Transverse colon (tissue), 4 donors: ENCODE measurements at regions of chr10 and their contacts with region 1.

Region 1: DNA sequence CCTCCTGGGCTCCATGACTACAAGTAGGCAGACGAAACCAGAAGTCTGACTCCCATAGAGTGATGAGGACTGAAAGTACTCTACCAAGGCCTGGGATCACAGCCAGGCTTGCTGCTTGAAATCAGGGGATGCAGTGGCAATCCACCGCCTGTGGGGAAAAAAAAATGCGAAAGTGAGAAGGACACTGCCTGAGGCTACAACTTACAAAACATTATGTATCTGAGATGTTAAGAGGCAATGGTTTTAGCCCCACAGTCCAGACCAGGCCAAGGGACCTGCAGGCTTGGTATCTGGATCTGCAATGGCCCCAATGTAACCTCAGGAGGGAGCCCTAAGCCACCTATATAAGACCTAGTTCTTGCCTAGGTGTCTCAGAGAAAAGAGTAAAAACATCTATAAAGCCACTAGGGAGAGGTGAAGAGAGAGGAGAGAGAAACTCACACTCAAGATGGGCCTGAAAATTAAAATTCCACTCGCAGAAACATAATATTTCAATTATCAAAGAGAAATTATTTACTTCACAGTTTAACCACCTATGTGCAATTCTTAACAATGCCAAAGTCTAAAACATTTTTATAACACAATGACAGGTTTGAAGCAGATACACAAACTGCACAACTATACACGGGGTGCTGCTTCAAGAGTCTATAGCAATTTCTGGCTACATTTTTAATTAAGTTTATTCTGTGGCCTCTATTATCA is 13.9 kb downstream of the DNAJC1 start:
- DNase-seq: peak; percentile 39
- H3K4me3 ChIP-seq: no peak overlapping the region
- H3K27ac ChIP-seq: peak overlapping the region in 1 of 4 donors; percentile 25
- H3K4me1 ChIP-seq: peaks cover 0 to 10% (median 3%) of the 10 kb centered on the region in 4 donors
- H3K27me3 ChIP-seq: no peaks in the 10 kb centered on the region
- CTCF ChIP-seq: peak in 4 of 5 experiments; percentile 36 to 52 (median 42)
- EP300 ChIP-seq: no peak
- POLR2A ChIP-seq: no peak

Region 2: DNA sequence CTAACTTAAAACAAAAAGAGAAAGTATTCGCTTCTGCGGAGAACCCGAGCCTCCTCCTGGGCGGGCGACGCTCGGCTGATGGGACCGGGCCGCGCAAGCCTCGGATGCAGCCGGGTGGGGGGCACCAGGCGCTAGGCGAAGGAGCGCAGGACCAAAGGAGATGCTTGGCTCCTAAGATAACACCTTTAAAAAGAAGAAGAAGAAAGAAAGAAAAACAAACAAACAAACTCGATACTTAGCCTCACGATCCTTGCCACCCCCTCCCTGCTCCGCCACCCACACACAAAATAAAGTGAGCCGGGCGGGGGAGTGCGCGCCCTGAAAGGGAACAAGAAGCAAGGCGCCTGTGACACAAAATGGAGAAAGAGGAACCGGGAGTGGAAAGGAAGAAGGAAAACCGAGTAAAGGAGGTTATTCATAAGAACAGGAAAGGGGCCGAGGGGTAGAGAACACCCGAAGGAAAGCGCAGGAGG is 262.2 kb after region 1 on chr10:
- in situ Hi-C with region 1: no loop called
- intact Hi-C with region 1: no loop called
- DNase-seq: peak; percentile 55
- H3K4me3 ChIP-seq: peak overlapping the region; percentile 28 to 92 (median 60)
- H3K27ac ChIP-seq: peak overlapping the region; percentile 83 to 96 (median 90)
- H3K4me1 ChIP-seq: peaks cover 0 to 26% (median 4%) of the 10 kb centered on the region in 4 donors
- H3K27me3 ChIP-seq: peaks cover 49% of the 10 kb centered on the region
- CTCF ChIP-seq: no peak
- EP300 ChIP-seq: no peak
- POLR2A ChIP-seq: peak; percentile 46

Region 3: GRCh38 chr10:22436884-22437619 is 447.4 kb after region 1 on chr10:
- in situ Hi-C with region 1: loop called in 1 of 4 experiments (anchors 25 kb)
- intact Hi-C with region 1: no loop called
- DNase-seq: peak; percentile 91
- H3K4me3 ChIP-seq: peak overlapping the region; percentile 61 to 88 (median 81)
- H3K27ac ChIP-seq: peak overlapping the region; percentile 92 to 98 (median 97)
- H3K4me1 ChIP-seq: peaks cover 9 to 22% (median 15%) of the 10 kb centered on the region in 4 donors
- H3K27me3 ChIP-seq: peaks cover 4% of the 10 kb centered on the region
- CTCF ChIP-seq: peak in 4 of 5 experiments; percentile 15 to 30 (median 20)
- EP300 ChIP-seq: no peak
- POLR2A ChIP-seq: peak; percentile 92

Region 4: GRCh38 chr10:22550732-22551131 is 561.1 kb after region 1 on chr10:
- in situ Hi-C with region 1: loop called in 1 of 4 experiments (anchors 25 kb)
- intact Hi-C with region 1: no loop called
- DNase-seq: peak; percentile 44
- H3K4me3 ChIP-seq: no peak overlapping the region
- H3K27ac ChIP-seq: no peak overlapping the region
- H3K4me1 ChIP-seq: no peaks in the 10 kb centered on the region
- H3K27me3 ChIP-seq: no peaks in the 10 kb centered on the region
- CTCF ChIP-seq: peak; percentile 39 to 55 (median 52)
- EP300 ChIP-seq: no peak
- POLR2A ChIP-seq: no peak

Region 5: GRCh38 chr10:22597138-22597537 is 607.5 kb after region 1 on chr10:
- in situ Hi-C with region 1: loop called in 1 of 4 experiments (anchors 25 kb)
- intact Hi-C with region 1: no loop called
- DNase-seq: peak; percentile 19
- H3K4me3 ChIP-seq: no peak overlapping the region
- H3K27ac ChIP-seq: peak overlapping the region in 1 of 4 donors; percentile 32
- H3K4me1 ChIP-seq: peaks cover 0 to 10% (median 0%) of the 10 kb centered on the region in 4 donors
- H3K27me3 ChIP-seq: no peaks in the 10 kb centered on the region
- CTCF ChIP-seq: no peak
- EP300 ChIP-seq: no peak
- POLR2A ChIP-seq: no peak

Region 6: GRCh38 chr10:22714479-22715289 is 725.1 kb after region 1 on chr10 and contains the start of gene PIP4K2A:
- in situ Hi-C with region 1: loop called in 1 of 4 experiments (anchors 25 kb)
- intact Hi-C with region 1: no loop called
- DNase-seq: peak; percentile 82
- H3K4me3 ChIP-seq: peak within 1 kb of the TSS; percentile 74 to 97 (median 87)
- H3K27ac ChIP-seq: peak within 1 kb of the TSS; percentile 88 to 90 (median 90)
- H3K4me1 ChIP-seq: peaks cover 6 to 30% (median 14%) of the 10 kb centered on the region in 4 donors
- H3K27me3 ChIP-seq: no peaks in the 10 kb centered on the region
- CTCF ChIP-seq: no peak
- EP300 ChIP-seq: no peak
- POLR2A ChIP-seq: no peak
- total RNA-seq, gene PIP4K2A: 2.6 to 14.9 (median 12.4) TPM